ENCODE measurements at regions of chr9 and their contacts with region 1.

Region 1: DNA sequence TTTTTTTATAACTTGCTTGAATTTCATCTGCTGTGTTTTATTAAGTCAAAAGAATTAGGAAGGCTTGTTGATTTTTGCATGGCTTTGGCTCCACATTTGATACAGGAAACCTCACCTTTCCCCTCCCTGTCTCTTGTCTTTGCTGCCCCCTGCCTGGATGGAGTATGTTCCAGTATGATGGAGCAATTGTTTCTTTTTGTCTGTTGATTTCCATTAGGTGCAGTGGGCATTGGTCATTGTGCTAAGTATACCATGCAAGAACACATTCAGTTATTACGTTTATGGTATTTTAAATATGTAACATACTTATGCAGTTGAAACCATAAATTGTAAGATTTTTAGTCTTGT is 19.6 kb downstream of the TJP2 start:
- DNase-seq: no peak
- CTCF ChIP-seq: no peak

Region 2: GRCh38 chr9:69044240-69045219 is 149.1 kb before region 1 on chr9:
- CTCF ChIA-PET with region 1: interaction called, 11 read pairs
- POLR2A ChIA-PET with region 1: no interaction called
- DNase-seq: no peak
- CTCF ChIP-seq: no peak

Region 3: GRCh38 chr9:69168709-69169217 is 24.9 kb before region 1 on chr9:
- CTCF ChIA-PET with region 1: interaction called, 15 read pairs
- POLR2A ChIA-PET with region 1: no interaction called
- DNase-seq: peak; percentile 69
- CTCF ChIP-seq: no peak

Region 4: DNA sequence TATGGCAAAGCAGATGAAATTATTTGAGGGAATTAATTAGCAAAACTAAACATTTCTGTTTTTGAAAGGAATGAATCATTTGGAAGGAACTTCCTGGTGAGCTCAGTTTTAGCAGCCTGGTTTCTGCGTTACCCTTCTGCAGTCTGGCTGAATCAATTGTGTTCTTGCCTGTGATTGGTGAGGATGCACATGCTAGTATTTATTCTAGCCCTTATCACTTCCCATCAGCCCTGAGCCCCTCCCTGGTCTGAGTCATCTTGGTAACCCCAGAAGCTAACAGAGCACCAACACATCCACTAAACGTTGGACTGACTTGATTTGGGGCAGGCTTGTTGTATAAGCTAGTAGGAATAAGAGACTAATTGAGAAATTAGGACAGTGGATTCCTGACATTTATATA is 13.0 kb before region 1 on chr9:
- CTCF ChIA-PET with region 1: interaction called, 67 read pairs
- POLR2A ChIA-PET with region 1: interaction called, 5 read pairs
- DNase-seq: no peak
- CTCF ChIP-seq: no peak

Region 5: DNA sequence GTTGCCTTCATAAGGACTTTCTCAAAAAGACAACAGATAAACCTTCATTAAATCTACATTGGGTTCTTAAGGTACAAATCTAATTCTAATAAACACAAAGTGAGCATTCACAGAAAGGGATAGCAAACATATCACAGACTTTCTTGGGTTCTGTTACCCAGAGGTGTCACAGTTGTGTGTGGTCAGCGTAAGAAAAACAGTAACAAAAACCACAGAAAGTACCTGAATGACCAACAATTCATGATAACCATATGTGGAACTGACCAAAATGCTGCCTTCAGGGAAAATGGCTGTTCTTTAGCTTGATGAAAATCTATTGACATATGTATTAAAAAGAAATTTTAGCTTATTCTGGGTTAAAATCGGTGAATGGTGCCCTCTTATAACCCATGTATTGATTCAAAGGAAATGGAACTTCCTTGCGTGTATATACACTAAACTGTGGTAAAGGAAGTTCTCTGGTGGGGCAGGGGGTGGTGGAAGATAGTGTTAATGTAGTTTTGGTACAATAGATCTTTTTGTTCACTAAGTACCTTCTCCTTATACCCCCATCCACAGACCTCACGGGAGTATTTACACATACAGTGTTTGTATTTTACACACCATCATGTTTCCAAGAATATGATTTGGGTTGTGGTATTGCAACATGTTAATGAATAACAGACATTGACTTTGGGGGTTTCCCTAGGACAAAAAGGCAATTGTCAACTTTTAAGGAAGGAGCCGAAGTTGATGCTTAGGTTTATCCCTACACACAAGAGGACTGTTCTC is 326.0 kb after region 1 on chr9:
- CTCF ChIA-PET with region 1: no interaction called
- POLR2A ChIA-PET with region 1: no interaction called
- DNase-seq: no peak
- CTCF ChIP-seq: no peak